ENCODE measurements at regions of chr22 and their contacts with region 1.

Region 1: DNA sequence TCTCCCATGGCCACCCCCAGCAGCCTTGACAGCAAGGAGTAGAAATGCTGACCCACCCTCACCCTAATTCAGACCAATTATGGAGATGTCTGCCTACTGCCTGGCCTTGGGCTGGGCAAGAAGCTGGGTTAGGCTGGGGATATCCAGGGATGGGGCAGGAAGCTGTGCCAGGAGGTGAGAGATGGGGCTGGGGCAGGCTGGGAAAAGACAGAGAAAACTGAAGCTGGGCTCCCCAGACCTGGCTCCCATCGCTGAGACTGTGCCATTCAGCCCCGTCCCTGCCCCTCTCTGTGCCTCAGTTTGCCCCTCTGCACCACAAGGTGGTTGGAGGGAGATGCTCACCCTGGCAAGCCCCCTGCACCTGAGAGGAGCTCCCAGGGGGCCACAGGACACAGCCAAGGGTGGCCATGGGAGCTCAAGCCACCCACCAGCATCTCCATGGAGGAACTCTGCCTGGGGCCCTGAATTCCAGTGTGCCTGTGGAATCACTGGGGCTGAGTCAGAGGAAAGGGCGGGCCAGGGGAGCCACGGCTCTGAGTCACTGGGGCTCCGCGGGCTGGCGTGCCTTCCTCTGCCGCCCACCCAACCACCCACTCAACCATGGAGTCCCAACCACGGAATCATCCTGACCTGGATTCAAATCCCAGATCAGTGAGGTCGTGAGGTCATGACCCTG is 6.0 kb upstream of the CARD10 start:
- DNase-seq: peak in 1 of 3 donors; percentile 54
- ATAC-seq: peak; percentile 36
- H3K4me3 ChIP-seq: no peak overlapping the region
- H3K4me1 ChIP-seq: peaks cover 19% of the 10 kb centered on the region
- CTCF ChIP-seq: no peak

Region 2: DNA sequence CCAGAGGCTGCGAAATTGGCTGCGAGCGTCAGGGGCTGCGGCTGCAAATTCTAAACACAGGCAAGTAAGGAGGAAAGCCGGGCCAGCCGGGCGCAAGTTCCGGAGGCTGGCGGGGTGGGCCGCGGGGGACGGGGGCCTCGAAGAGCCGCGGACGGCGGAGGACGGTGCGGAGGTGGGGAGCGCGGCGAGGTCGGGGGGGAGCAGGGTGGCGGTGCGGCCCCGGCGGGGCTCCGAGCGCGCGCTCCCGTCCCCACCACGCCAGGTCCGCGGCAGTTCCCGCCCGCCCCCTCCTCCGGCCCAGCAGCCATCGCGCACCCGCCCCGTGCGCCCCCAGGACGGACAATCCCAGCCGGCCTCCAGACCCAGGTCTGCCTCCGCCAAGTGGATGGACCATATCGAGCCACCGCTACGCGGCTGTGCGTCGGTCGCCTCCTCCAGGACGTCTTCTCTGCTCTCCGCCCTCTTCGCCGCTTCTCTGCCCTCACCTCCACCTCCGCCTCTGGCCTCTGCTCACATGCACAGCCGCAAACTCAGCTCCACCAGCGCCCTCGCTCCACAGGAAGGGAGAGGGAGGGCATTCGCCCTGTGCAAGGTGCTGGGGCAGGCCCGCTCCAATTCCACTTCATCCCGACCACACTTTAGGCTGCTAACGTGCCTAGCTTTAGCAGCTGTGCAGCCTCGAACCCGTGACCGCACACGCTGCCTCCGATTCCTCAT is 105.1 kb before region 1 on chr22:
- intact Hi-C with region 1: loop called in 1 of 2 experiments (anchors 5 kb)
- DNase-seq: no peak
- ATAC-seq: peak; percentile 15
- H3K4me3 ChIP-seq: no peak overlapping the region
- H3K4me1 ChIP-seq: no peaks in the 10 kb centered on the region
- CTCF ChIP-seq: no peak

Region 3: DNA sequence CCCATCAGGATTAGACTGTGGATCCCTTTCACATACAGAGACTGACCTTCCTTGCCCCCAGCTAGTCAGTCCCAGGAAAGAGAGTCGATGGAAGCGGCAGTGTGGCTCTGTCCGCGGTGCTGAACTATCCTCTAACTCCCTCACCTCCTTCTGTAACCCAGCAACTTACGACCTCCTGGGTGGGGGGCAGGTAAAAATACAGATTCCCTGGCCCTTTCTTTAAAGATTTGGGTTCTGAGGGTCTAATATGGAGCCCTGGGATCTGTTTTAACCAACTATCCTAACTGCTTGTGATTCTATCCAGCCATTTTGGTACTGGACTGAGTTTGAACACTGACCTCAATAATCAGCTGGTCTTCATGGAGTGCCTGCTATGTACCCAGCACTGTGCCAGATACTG is 62.2 kb before region 1 on chr22:
- intact Hi-C with region 1: no loop called
- DNase-seq: peak in 1 of 3 donors; percentile 46
- ATAC-seq: peak; percentile 40
- H3K4me3 ChIP-seq: no peak overlapping the region
- H3K4me1 ChIP-seq: no peaks in the 10 kb centered on the region
- CTCF ChIP-seq: no peak

Region 4: DNA sequence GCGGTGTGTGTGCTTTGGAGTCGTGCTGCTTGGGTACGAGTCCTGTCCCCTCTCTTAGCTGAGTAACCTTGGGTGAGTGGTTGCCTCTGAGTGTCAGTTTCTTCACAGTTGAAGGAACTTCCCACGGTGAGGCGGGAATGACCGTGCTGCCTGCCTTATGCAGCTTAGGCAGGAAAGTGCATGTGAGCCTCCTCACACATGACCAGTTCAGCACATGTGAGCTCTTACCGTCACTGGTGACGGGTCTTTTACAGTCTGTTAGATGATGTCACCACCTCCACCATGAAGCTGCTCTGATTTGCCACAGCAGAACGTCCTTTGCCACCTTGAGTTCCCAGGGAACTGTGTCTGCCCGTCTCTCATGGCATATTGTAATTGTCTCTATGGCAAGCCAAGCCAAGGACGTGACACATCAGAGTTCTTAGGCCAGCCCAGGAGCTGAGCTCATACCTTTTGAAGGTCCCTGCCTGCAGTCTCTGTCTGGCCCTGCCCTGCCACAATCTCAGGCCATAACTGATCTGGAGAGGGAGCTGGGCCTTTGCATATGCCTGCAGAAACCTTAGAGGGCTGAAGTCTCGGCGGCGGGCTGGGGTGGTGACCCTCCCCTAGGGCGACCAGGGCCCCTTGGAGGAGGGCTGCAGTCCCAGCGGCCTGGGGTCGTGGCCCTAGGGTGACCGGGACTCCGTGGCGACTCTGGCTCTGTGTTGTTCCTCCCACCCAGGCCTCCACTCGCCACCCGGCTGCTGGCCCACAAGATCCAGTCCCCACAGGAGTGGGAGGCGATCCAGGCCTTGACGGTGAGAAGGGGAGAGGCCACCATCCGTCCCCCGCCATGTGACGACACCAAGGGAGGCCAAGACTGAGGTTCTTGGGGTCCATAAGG is 91.2 kb after region 1 on chr22:
- intact Hi-C with region 1: no loop called
- DNase-seq: no peak
- ATAC-seq: no peak
- H3K4me3 ChIP-seq: no peak overlapping the region
- H3K4me1 ChIP-seq: no peaks in the 10 kb centered on the region
- CTCF ChIP-seq: no peak

Measured in mucosa of descending colon (tissue), 3 donors.